Dorsolateral prefrontal cortex (tissue), 120 donors: ENCODE measurements at regions of chr22 and their contacts with region 1.

Region 1: DNA sequence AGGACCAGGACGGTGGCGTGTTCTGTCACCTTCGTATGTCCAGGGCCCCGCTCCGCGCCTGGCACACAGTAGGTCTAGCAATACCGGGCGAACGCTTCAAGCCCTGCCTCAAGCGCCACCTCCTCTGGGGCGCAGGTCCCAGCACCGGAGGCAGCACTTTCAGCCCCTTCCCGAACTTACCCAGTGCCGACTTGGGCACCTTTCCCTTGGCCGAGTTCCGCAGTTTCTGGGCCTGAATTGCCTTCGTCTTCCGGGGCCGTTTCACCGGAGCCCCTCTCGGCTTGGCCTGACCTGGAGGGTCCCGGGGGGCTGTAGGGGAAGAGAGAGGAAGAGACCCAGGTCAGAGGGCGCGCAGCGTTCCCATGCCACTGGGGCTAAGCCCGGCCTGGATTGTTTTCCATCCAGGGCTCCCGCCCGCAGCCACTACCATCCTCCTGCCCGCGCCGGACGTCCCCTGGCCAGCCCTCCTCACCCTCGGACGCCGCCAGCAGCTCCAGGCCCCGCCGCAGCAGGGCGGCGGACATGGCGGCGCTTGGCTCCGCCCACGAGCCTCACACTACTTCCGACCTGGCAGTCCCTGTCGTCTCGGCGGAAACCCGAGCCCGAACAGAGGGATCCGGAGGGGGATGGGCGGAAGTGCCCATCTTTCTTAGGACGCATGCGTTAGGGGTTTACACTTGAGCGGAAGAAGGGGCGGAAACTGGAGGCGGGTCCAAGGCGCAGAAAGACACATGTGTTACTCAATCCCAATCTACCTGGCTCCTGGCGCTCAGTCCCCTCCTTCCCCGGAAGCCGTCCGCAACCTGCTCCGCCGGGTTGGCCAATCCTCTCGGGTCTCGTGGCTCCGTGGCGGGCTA is at the start of gene RPS19BP1:
- DNase-seq: peak; percentile 96 to 99 (median 98)
- H3K4me3 ChIP-seq: peak within 1 kb of the TSS; percentile 58 to 100 (median 94)
- H3K27ac ChIP-seq: peak within 1 kb of the TSS; percentile 53 to 98 (median 93)
- H3K27me3 ChIP-seq: no peaks in the 10 kb centered on the region
- CTCF ChIP-seq: peak in 45 of 56 donors; percentile 4 to 56 (median 34)
- total RNA-seq, gene RPS19BP1: 44.3 to 109 (median 63.6) TPM

Region 2: GRCh38 chr22:39170825-39171622 is 361.4 kb before region 1 on chr22:
- intact Hi-C with region 1: loop called (anchors 2 to 5 kb)
- DNase-seq: peak; percentile 76 to 93 (median 84)
- H3K4me3 ChIP-seq: peak overlapping the region in 41 of 59 donors; percentile 1 to 57 (median 29)
- H3K27ac ChIP-seq: peak overlapping the region in 4 of 59 donors; percentile 6 to 28 (median 24)
- H3K27me3 ChIP-seq: no peaks in the 10 kb centered on the region
- CTCF ChIP-seq: peak; percentile 95 to 99 (median 98)

Region 3: GRCh38 chr22:39395936-39396796 is 136.3 kb before region 1 on chr22:
- intact Hi-C with region 1: loop called in 1 of 2 experiments (anchors 5 kb)
- DNase-seq: peak in 1 of 10 donors; percentile 88
- H3K4me3 ChIP-seq: no peak overlapping the region
- H3K27ac ChIP-seq: peak overlapping the region in 2 of 59 donors; percentile 48 to 99
- H3K27me3 ChIP-seq: no peaks in the 10 kb centered on the region
- CTCF ChIP-seq: no peak

Region 4: GRCh38 chr22:40036591-40037225 is 504.3 kb after region 1 on chr22:
- intact Hi-C with region 1: loop called (anchors 5 kb)
- DNase-seq: peak; percentile 36 to 79 (median 70)
- H3K4me3 ChIP-seq: no peak overlapping the region
- H3K27ac ChIP-seq: no peak overlapping the region
- H3K27me3 ChIP-seq: peaks cover 0 to 53% (median 0%) of the 10 kb centered on the region in 45 donors
- CTCF ChIP-seq: peak; percentile 20 to 82 (median 67)

Region 5: GRCh38 chr22:40193429-40194421 is 661.3 kb after region 1 on chr22:
- intact Hi-C with region 1: loop called in 1 of 2 experiments (anchors 10 kb)
- DNase-seq: no peak
- H3K4me3 ChIP-seq: no peak overlapping the region
- H3K27ac ChIP-seq: peak overlapping the region in 10 of 59 donors; percentile 2 to 53 (median 16)
- H3K27me3 ChIP-seq: no peaks in the 10 kb centered on the region
- CTCF ChIP-seq: peak in 55 of 56 donors; percentile 20 to 67 (median 44)

Region 6: DNA sequence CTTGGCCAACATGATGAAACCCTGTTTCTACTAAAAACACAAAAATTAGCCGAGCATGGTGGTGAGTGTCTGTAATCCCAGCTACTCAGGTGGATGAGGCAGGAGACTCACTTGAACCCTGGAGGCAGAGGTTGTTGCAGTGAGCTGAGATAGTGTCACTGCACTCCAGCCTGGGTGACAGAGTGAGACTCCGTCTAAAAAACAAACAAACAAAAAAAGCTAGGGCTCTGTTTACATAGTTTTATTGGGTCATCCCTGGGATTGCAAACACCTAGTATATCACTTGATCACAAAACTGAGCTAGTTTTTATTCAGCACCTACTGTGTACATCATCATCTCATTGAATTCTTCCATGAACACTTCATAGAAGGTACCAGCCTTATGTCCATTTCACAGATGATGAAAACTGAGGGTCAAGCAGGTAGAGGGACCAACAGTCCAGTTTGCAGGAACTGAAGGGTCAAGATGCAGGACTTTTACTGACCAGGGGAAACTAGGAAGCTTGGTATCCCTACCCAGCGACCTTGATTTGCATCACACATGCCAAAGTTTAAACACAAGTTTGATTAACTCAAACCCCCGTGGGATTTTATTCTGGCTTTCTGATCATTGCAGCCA is 1113.2 kb after region 1 on chr22:
- intact Hi-C with region 1: loop called (anchors 5 to 10 kb)
- DNase-seq: no peak
- H3K4me3 ChIP-seq: peak overlapping the region in 1 of 59 donors; percentile 29
- H3K27ac ChIP-seq: peak overlapping the region in 19 of 59 donors; percentile 4 to 69 (median 55)
- H3K27me3 ChIP-seq: no peaks in the 10 kb centered on the region
- CTCF ChIP-seq: no peak